ENCODE measurements at regions of chr3 and their contacts with region 1.

Region 1: DNA sequence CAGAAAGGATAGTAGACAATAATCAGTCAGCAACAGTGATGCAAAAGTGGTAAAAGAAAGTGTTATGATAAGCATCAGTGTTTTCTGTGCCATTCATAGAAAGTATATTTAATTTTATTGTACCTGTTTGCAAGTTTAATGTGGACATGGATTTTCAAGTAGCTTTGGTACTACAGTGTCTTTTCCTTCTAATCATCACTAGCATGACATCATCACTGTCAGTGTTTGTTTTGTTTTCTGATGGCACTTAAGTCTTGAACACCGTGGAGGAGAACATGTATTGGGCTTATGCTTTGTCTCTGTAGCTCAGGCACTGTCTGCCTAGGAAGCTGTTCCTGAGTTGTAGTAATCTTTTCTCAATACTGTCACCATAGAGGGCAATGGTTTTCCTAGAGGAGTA is 41.9 kb downstream of the SETD5 start:
- DNase-seq: no peak
- ATAC-seq: no peak
- H3K4me3 ChIP-seq: no peak overlapping the region
- H3K27ac ChIP-seq: no peak overlapping the region
- H3K4me1 ChIP-seq: no peaks in the 10 kb centered on the region
- H3K27me3 ChIP-seq: no peaks in the 10 kb centered on the region
- CTCF ChIP-seq: no peak
- POLR2A ChIP-seq: no peak

Region 2: GRCh38 chr3:8143186-8143585 is 1296.1 kb before region 1 on chr3:
- intact Hi-C with region 1: no loop called
- DNase-seq: no peak
- ATAC-seq: no peak
- H3K4me3 ChIP-seq: no peak overlapping the region
- H3K27ac ChIP-seq: no peak overlapping the region
- H3K4me1 ChIP-seq: no peaks in the 10 kb centered on the region
- H3K27me3 ChIP-seq: no peaks in the 10 kb centered on the region
- CTCF ChIP-seq: no peak
- POLR2A ChIP-seq: no peak

Region 3: DNA sequence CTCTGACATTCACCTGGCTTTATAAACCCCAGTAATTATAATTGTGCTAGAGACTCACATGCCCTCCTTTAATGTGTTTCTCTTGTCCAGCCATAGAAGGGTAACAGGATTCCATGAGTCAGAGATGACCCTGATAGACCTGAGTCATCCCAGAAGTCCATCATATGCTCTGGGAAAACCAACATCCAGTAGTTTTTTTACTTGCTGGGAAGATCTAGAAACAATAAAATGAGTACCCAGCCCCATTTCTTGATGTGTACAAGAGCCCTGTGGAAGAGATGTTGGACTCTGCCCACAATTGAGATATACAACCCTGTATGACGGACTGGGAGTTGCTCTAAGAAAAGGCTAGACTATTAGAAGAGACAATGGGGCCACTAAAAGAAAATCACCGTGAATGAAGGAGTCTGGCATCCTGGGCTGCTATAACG is 98.8 kb before region 1 on chr3:
- intact Hi-C with region 1: no loop called
- DNase-seq: no peak
- ATAC-seq: no peak
- H3K4me3 ChIP-seq: no peak overlapping the region
- H3K27ac ChIP-seq: peak overlapping the region in 2 of 4 donors; percentile 21 to 50
- H3K4me1 ChIP-seq: peaks cover 10% of the 10 kb centered on the region
- H3K27me3 ChIP-seq: no peaks in the 10 kb centered on the region
- CTCF ChIP-seq: no peak
- POLR2A ChIP-seq: no peak

Region 4: DNA sequence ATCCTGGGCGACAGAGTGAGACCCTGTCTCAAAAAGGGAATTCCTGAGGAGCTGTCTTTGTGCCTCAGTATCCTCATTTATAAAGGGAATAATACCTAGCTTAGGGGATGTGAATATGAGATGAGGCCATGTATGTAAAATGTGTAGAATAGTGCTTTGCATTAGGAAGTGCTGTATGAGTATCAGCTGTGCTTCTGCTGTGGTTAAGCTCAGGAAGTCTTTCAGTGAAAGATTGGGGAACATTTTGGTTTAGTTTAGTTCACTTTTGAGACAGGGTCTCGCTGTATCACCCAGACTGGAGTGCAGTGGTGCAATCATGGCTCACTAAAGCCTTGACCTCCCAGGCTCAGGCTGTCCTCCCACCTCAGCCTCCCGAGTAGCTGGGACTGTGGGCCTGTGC is 65.9 kb before region 1 on chr3:
- intact Hi-C with region 1: loop called (anchors 10 kb)
- DNase-seq: no peak
- ATAC-seq: no peak
- H3K4me3 ChIP-seq: no peak overlapping the region
- H3K27ac ChIP-seq: no peak overlapping the region
- H3K4me1 ChIP-seq: no peaks in the 10 kb centered on the region
- H3K27me3 ChIP-seq: no peaks in the 10 kb centered on the region
- CTCF ChIP-seq: no peak
- POLR2A ChIP-seq: no peak

Measured in body of pancreas (tissue), 4 donors.